ENCODE measurements at regions of chr6 and their contacts with region 1.

Region 1: DNA sequence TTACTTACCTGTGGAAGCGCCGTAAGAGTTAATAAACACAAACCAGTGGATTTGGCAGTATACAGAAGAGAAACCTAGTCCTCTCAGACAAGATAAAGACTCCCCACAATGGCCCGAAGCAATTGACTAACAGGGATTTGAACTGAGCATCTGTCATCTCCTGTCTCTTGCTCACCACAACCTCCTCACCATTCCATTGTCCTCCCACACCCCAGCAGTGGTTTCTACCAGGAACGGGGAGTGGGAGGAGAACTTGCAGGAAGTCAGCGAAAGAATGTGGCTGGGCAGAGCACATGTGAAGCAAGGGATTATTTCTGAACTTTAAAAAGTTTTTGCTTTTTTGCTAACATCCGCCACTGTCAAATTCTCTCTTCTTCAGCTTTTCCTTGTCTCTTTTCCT is 24.6 kb upstream of the TAAR1 start:
- DNase-seq: no peak
- H3K4me3 ChIP-seq: no peak overlapping the region
- H3K27ac ChIP-seq: no peak overlapping the region
- H3K4me1 ChIP-seq: no peaks in the 10 kb centered on the region
- H3K27me3 ChIP-seq: no peaks in the 10 kb centered on the region
- CTCF ChIP-seq: no peak
- EP300 ChIP-seq: no peak
- POLR2A ChIP-seq: no peak
- RAD21 ChIP-seq: no peak

Region 2: GRCh38 chr6:132669690-132670291 is 13.8 kb before region 1 on chr6:
- CTCF ChIA-PET with region 1: interaction called, 15 read pairs
- POLR2A ChIA-PET with region 1: no interaction called
- DNase-seq: no peak
- H3K4me3 ChIP-seq: no peak overlapping the region
- H3K27ac ChIP-seq: no peak overlapping the region
- H3K4me1 ChIP-seq: peaks cover 0 to 6% (median 0%) of the 10 kb centered on the region in 4 experiments; a peak in 2 of 7 replicates
- H3K27me3 ChIP-seq: no peaks in the 10 kb centered on the region
- CTCF ChIP-seq: peak in 2 of 3 experiments; percentile 8 to 25; a peak in 2 of 4 replicates
- EP300 ChIP-seq: no peak
- POLR2A ChIP-seq: no peak
- RAD21 ChIP-seq: peak; percentile 40 to 49

Measured in H1 (cell line).